ENCODE measurements at regions of chr5 and their contacts with region 1.

Region 1: DNA sequence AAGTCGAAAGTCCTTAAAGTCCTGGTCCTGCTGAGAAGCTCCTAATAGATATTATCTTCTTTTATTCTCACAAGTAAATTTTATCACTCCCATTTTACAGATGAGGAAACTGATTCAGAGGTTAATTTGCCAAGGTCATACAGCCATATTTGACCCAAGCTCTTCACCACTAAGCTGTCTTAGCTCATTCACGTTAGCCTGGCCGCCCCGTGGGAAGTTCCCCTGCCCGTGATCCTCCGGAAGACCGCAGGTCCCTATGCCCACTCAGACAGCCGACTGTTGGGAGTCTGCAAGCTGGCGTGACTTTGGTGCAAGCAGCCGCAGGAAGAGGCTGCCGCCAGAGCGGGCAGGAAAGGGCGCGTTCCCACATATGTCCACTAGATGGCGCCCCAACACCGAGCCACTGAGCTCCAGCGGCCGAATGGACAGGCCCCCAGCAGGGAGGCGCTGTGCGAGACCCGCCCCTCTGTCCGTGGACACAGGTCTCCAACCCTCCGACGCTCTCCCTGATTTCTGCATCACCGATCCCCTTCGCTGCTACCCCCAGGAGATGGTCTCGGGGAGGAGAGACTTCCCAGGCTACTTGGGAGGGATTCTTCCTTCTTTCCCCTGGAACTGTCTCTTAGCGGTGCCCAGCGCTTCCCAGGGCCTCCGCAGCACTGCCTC is 10.0 kb upstream of the ARAP3 start:
- DNase-seq: peak; percentile 90
- ATAC-seq: peak; percentile 94 to 96
- H3K4me3 ChIP-seq: peak overlapping the region; percentile 35
- H3K27ac ChIP-seq: no peak overlapping the region
- H3K4me1 ChIP-seq: peaks cover 11% of the 10 kb centered on the region
- H3K27me3 ChIP-seq: no peaks in the 10 kb centered on the region
- CTCF ChIP-seq: peak; percentile 100

Region 2: GRCh38 chr5:141951332-141951781 is 259.4 kb after region 1 on chr5:
- intact Hi-C with region 1: loop called (anchors 10 kb)
- DNase-seq: no peak
- ATAC-seq: no peak
- H3K4me3 ChIP-seq: peak overlapping the region; percentile 13
- H3K27ac ChIP-seq: peak overlapping the region; percentile 34
- H3K4me1 ChIP-seq: peaks cover 22% of the 10 kb centered on the region
- H3K27me3 ChIP-seq: no peaks in the 10 kb centered on the region
- CTCF ChIP-seq: peak; percentile 18

Measured in lower lobe of right lung (tissue), 2 donors.